WTC11 (cell line): ENCODE measurements at regions of chr6 and their contacts with region 1.

Region 1: DNA sequence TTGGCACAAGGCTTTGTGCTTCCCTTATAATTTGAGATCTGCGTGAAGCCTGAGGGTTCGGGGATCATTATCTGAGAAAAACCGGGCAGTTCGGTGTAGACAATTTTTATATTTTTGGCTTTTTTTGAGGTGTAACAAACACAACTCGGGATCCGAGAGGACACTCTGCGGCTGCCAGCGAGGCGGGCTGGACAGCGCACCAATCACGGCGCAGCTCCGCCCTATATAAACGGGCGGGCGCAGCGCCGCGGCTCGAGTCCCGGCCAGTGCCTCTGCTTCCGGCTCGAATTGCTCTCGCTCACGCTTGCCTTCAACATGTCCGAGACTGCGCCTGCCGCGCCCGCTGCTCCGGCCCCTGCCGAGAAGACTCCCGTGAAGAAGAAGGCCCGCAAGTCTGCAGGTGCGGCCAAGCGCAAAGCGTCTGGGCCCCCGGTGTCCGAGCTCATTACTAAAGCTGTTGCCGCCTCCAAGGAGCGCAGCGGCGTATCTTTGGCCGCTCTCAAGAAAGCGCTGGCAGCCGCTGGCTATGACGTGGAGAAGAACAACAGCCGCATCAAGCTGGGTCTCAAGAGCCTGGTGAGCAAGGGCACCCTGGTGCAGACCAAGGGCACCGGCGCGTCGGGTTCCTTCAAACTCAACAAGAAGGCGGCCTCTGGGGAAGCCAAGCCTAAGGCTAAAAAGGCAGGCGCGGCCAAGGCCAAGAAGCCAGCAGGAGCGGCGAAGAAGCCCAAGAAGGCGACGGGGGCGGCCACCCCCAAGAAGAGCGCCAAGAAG is 69.0 kb downstream of the HFE start:
- DNase-seq: peak; percentile 81
- ATAC-seq: peak; percentile 47
- H3K4me3 Mint-ChIP-seq: peak overlapping the region; percentile 84
- H3K27ac Mint-ChIP-seq: peak overlapping the region; percentile 98
- H3K4me1 Mint-ChIP-seq: peaks cover 22% of the 10 kb centered on the region
- H3K27me3 Mint-ChIP-seq: peaks cover 3% of the 10 kb centered on the region; the same call in 1 of the 2 replicates
- CTCF ChIP-seq: no peak

Region 2: GRCh38 chr6:26045065-26045927 is 111.0 kb before region 1 on chr6:
- CTCF ChIA-PET with region 1: no interaction called
- POLR2A ChIA-PET with region 1: interaction called, 13 read pairs
- DNase-seq: peak; percentile 43
- ATAC-seq: peak; percentile 22; the same call in 1 of the 2 replicates
- H3K4me3 Mint-ChIP-seq: peak overlapping the region; percentile 64
- H3K27ac Mint-ChIP-seq: peak overlapping the region; percentile 95
- H3K4me1 Mint-ChIP-seq: peaks cover 42% of the 10 kb centered on the region
- H3K27me3 Mint-ChIP-seq: no peaks in the 10 kb centered on the region
- CTCF ChIP-seq: no peak

Region 3: DNA sequence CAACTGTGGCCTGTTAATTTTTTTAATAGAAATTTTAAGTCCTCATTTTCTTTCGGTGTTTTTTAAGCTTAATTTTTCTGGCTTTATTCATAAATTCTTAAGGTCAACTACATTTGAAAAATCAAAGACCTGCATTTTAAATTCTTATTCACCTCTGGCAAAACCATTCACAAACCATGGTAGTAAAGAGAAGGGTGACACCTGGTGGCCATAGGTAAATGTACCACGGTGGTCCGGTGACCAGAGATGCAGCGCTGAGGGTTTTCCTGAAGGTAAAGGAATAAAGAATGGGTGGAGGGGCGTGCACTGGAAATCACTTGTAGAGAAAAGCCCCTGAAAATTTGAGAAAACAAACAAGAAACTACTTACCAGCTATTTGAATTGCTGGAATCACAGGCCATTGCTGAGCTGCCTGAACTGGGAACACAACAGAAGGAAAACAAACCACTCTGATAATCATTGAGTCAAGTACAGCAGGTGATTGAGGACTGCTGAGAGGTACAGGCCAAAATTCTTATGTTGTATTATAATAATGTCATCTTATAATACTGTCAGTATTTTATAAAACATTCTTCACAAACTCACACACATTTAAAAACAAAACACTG is 58.9 kb before region 1 on chr6:
- CTCF ChIA-PET with region 1: no interaction called
- POLR2A ChIA-PET with region 1: no interaction called
- DNase-seq: peak; percentile 68
- ATAC-seq: peak; percentile 93
- H3K4me3 Mint-ChIP-seq: no peak overlapping the region
- H3K27ac Mint-ChIP-seq: no peak overlapping the region
- H3K4me1 Mint-ChIP-seq: peaks cover 14% of the 10 kb centered on the region
- H3K27me3 Mint-ChIP-seq: no peaks in the 10 kb centered on the region
- CTCF ChIP-seq: peak; percentile 65; the same call in 1 of the 2 replicates

Region 4: GRCh38 chr6:26141378-26141904 is 14.8 kb before region 1 on chr6:
- CTCF ChIA-PET with region 1: no interaction called
- POLR2A ChIA-PET with region 1: interaction called, 15 read pairs
- DNase-seq: no peak
- ATAC-seq: peak; percentile 62
- H3K4me3 Mint-ChIP-seq: no peak overlapping the region
- H3K27ac Mint-ChIP-seq: no peak overlapping the region
- H3K4me1 Mint-ChIP-seq: peaks cover 19% of the 10 kb centered on the region
- H3K27me3 Mint-ChIP-seq: no peaks in the 10 kb centered on the region
- CTCF ChIP-seq: no peak

Region 5: DNA sequence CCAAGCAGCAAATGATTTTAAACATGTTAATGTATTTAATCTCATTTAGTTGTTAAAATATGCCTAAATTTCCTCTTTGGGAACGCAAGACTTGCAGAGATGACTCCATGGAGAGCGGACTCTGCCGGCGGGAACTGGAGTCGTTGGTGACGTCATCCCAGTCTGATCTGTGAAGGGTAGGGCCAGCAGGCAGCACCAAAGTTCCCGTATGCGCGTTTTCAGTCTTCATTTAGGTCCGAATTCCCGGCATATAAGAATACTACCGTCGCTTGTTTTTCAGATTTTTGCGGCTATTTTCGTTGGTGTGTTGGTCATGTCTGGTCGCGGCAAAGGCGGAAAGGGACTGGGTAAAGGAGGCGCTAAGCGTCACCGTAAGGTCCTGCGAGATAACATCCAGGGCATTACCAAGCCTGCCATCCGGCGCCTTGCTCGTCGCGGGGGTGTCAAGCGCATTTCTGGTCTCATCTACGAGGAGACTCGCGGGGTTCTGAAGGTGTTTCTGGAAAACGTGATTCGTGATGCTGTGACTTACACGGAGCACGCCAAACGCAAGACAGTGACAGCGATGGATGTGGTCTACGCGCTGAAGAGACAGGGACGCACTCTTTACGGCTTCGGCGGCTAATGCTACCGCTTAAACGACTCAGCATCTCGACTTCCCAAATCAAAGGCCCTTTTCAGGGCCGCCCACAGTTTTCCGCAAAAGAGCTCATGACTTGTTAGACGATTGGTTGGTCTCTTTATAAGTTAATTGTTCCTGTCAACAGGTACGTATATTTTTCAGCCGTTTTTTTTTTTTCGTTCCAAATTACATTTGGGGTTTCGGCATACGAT is 48.3 kb after region 1 on chr6:
- CTCF ChIA-PET with region 1: interaction called, 3 read pairs
- POLR2A ChIA-PET with region 1: interaction called, 199 read pairs
- DNase-seq: peak; percentile 90
- ATAC-seq: peak; percentile 58
- H3K4me3 Mint-ChIP-seq: no peak overlapping the region
- H3K27ac Mint-ChIP-seq: no peak overlapping the region
- H3K4me1 Mint-ChIP-seq: peaks cover 22% of the 10 kb centered on the region
- H3K27me3 Mint-ChIP-seq: no peaks in the 10 kb centered on the region
- CTCF ChIP-seq: no peak

Region 6: DNA sequence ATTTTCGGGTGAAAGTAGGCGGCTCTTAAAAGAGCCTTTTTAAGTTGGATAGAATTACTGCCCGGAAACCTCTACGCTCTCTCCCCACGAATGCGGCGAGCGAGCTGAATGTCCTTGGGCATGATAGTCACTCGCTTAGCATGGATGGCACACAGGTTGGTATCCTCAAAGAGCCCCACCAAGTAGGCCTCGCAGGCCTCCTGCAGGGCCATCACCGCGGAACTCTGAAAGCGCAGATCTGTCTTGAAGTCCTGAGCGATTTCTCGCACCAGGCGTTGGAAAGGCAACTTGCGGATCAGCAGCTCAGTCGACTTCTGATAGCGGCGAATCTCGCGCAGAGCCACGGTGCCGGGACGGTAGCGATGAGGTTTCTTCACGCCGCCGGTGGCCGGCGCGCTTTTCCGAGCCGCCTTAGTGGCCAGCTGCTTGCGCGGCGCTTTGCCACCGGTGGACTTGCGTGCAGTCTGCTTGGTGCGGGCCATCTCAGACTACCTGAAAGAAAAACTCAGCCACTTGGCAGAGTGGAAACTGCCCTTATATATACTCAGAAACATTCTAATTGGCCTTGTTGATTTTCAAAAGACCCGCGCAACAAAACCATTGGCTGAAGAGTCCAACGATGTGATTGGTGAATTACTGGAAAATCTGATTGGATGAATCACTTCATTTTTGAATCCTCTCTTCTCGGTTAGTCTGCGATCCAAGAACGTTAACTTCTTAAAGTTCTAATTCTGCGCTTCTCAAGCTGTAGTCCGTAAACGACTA is 114.8 kb after region 1 on chr6:
- CTCF ChIA-PET with region 1: no interaction called
- POLR2A ChIA-PET with region 1: interaction called, 90 read pairs
- DNase-seq: peak; percentile 65
- ATAC-seq: peak; percentile 28
- H3K4me3 Mint-ChIP-seq: no peak overlapping the region
- H3K27ac Mint-ChIP-seq: no peak overlapping the region
- H3K4me1 Mint-ChIP-seq: peaks cover 35% of the 10 kb centered on the region
- H3K27me3 Mint-ChIP-seq: no peaks in the 10 kb centered on the region
- CTCF ChIP-seq: no peak

Region 7: GRCh38 chr6:27146706-27147505 is 990.6 kb after region 1 on chr6:
- CTCF ChIA-PET with region 1: no interaction called
- POLR2A ChIA-PET with region 1: interaction called, 12 read pairs
- DNase-seq: peak; percentile 80
- ATAC-seq: peak; percentile 67
- H3K4me3 Mint-ChIP-seq: no peak overlapping the region
- H3K27ac Mint-ChIP-seq: no peak overlapping the region
- H3K4me1 Mint-ChIP-seq: peaks cover 23% of the 10 kb centered on the region
- H3K27me3 Mint-ChIP-seq: no peaks in the 10 kb centered on the region
- CTCF ChIP-seq: no peak

Region 8: GRCh38 chr6:27871924-27872638 is 1715.8 kb after region 1 on chr6:
- CTCF ChIA-PET with region 1: no interaction called
- POLR2A ChIA-PET with region 1: interaction called, 12 read pairs
- DNase-seq: peak; percentile 79
- ATAC-seq: peak; percentile 58
- H3K4me3 Mint-ChIP-seq: peak overlapping the region; percentile 94
- H3K27ac Mint-ChIP-seq: peak overlapping the region; percentile 99
- H3K4me1 Mint-ChIP-seq: peaks cover 50% of the 10 kb centered on the region
- H3K27me3 Mint-ChIP-seq: no peaks in the 10 kb centered on the region
- CTCF ChIP-seq: no peak